ENCODE measurements at regions of chr9 and their contacts with region 1.

Region 1: GRCh38 chr9:5450359-5451091 is at the start of gene CD274:
- DNase-seq: peak; percentile 70 to 91
- ATAC-seq: peak; percentile 98 to 99
- H3K4me3 ChIP-seq: peak within 1 kb of the TSS; percentile 47
- H3K27ac ChIP-seq: peak within 1 kb of the TSS; percentile 69 to 84
- H3K4me1 ChIP-seq: peaks cover 54% of the 10 kb centered on the region
- CTCF ChIP-seq: peak; percentile 75
- EP300 ChIP-seq: no peak
- POLR2A ChIP-seq: peak; percentile 44
- RAD21 ChIP-seq: peak; percentile 80 to 83
- polyA plus RNA-seq, gene CD274: 6.4 and 6.8 TPM in 2 replicates

Region 2: DNA sequence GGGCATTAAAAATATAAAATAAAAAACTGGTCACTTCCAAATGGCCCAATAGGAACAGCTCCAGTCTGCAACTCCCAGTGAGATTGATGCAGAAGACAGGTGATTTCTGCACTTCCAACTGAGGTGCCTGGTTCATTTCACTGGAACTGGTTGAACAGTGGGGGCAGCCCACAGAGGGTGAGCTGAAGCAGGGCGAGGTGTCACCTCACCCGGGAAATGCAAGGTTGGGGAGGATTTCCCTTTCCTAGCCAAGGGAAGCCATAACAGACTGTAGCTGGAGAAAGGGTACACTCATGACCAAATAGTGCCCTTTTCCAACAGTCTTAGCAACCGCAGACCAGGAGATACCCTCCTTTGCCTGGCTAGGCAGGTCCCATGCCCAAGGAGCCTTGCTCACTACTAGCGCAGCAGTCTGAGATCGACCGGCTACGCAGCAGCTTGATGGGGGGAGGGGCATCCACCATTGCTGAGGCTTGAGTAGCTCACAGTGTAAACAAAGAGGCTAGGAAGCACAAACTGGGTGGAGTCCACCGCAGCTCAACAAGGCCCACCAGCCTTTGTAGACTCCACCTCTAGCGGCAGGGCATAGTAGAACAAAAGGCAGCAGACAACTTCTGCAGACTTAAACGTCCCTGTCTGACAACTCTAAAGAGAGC is 123.5 kb before region 1 on chr9:
- CTCF ChIA-PET with region 1: no interaction called
- POLR2A ChIA-PET with region 1: no interaction called
- DNase-seq: no peak
- ATAC-seq: no peak
- H3K4me3 ChIP-seq: no peak overlapping the region
- H3K27ac ChIP-seq: no peak overlapping the region
- H3K4me1 ChIP-seq: no peaks in the 10 kb centered on the region
- CTCF ChIP-seq: no peak
- EP300 ChIP-seq: no peak
- POLR2A ChIP-seq: no peak
- RAD21 ChIP-seq: no peak

Region 3: GRCh38 chr9:5437254-5438216 is 13.0 kb before region 1 on chr9 and contains the start of gene PLGRKT:
- CTCF ChIA-PET with region 1: interaction called, 8 read pairs
- POLR2A ChIA-PET with region 1: interaction called, 17 read pairs
- DNase-seq: peak; percentile 82 to 94
- ATAC-seq: peak; percentile 97 to 99
- H3K4me3 ChIP-seq: peak within 1 kb of the TSS; percentile 73
- H3K27ac ChIP-seq: peak within 1 kb of the TSS; percentile 87 to 91
- H3K4me1 ChIP-seq: peaks cover 18% of the 10 kb centered on the region
- CTCF ChIP-seq: no peak
- EP300 ChIP-seq: no peak
- POLR2A ChIP-seq: peak; percentile 94
- RAD21 ChIP-seq: no peak
- polyA plus RNA-seq, gene PLGRKT: 22.4 and 37.7 TPM in 2 replicates

Region 4: GRCh38 chr9:5510360-5510931 is 59.9 kb after region 1 on chr9 and contains the start of gene PDCD1LG2:
- CTCF ChIA-PET with region 1: interaction called, 13 read pairs
- POLR2A ChIA-PET with region 1: interaction called, 5 read pairs
- DNase-seq: no peak
- ATAC-seq: peak; percentile 49 to 51; a peak in 3 of 6 replicates
- H3K4me3 ChIP-seq: no peak within 1 kb of the TSS
- H3K27ac ChIP-seq: peak within 1 kb of the TSS; percentile 62 to 81
- H3K4me1 ChIP-seq: peaks cover 24% of the 10 kb centered on the region
- CTCF ChIP-seq: no peak
- EP300 ChIP-seq: no peak
- POLR2A ChIP-seq: no peak
- RAD21 ChIP-seq: no peak
- polyA plus RNA-seq, gene PDCD1LG2: 0.46 and 0.53 TPM in 2 replicates

Region 5: DNA sequence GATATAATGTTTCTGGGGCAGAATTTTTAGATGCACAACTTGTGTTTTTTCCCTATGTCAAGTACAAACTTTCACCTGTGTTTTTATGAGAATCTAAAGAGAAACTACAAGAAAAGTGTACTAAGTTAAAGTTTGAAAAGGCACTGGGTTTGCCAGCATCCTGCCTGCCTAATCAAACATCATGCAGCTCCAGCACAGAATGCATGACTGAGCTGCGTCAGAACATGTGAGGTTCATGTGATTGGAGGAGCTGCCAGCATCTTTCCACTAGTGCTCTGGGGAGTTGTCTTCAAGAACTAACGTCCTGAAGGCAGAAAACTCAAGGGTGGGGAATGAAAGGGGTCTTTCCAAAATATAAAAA is 132.3 kb after region 1 on chr9:
- CTCF ChIA-PET with region 1: interaction called, 96 read pairs
- POLR2A ChIA-PET with region 1: interaction called, 4 read pairs
- DNase-seq: no peak
- ATAC-seq: peak; percentile 82 to 89
- H3K4me3 ChIP-seq: no peak overlapping the region
- H3K27ac ChIP-seq: 0 out of 6 replicates have a peak overlapping the region, but pooled peaks of 1 of the 2 experiments have one; percentile 3
- H3K4me1 ChIP-seq: peaks cover 8% of the 10 kb centered on the region; the same call in 2 of the 3 replicates
- CTCF ChIP-seq: no peak
- EP300 ChIP-seq: no peak
- POLR2A ChIP-seq: no peak
- RAD21 ChIP-seq: no peak

Region 6: DNA sequence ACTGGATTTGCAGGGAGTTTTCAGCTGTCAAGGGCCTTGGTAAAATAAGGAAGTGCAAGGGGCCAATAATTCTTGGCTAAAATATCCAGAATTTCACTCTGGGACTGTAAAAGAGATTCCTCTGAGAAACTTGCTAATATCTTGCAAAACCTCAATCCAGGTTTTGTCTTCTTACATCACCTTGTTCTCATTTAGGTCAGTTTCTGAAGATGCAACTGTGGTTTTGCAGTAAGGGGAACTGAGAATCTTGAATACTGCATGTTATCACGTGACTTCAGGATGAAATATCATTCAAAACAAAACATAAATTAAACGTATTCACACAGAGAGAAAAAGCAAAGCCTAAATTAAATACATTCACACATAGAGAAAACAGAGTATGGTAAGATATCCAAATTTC is 143.4 kb after region 1 on chr9:
- CTCF ChIA-PET with region 1: interaction called, 96 read pairs
- POLR2A ChIA-PET with region 1: no interaction called
- DNase-seq: no peak
- ATAC-seq: no peak
- H3K4me3 ChIP-seq: no peak overlapping the region
- H3K27ac ChIP-seq: no peak overlapping the region
- H3K4me1 ChIP-seq: no peaks in the 10 kb centered on the region
- CTCF ChIP-seq: no peak
- EP300 ChIP-seq: no peak
- POLR2A ChIP-seq: no peak
- RAD21 ChIP-seq: no peak

Region 7: GRCh38 chr9:5628530-5629311 is 178.2 kb after region 1 on chr9 and contains the start of gene RIC1:
- CTCF ChIA-PET with region 1: interaction called, 7 read pairs
- POLR2A ChIA-PET with region 1: interaction called, 21 read pairs
- DNase-seq: peak; percentile 92 to 94
- ATAC-seq: peak; percentile 86 to 90
- H3K4me3 ChIP-seq: peak within 1 kb of the TSS; percentile 84
- H3K27ac ChIP-seq: peak within 1 kb of the TSS; percentile 87 to 97
- H3K4me1 ChIP-seq: peaks cover 47% of the 10 kb centered on the region
- CTCF ChIP-seq: no peak
- EP300 ChIP-seq: no peak
- POLR2A ChIP-seq: peak; percentile 92
- RAD21 ChIP-seq: peak in 1 of 2 experiments; percentile 18; a peak in 1 of 5 replicates
- polyA plus RNA-seq, gene RIC1: 26.8 and 32.8 TPM in 2 replicates

Region 8: DNA sequence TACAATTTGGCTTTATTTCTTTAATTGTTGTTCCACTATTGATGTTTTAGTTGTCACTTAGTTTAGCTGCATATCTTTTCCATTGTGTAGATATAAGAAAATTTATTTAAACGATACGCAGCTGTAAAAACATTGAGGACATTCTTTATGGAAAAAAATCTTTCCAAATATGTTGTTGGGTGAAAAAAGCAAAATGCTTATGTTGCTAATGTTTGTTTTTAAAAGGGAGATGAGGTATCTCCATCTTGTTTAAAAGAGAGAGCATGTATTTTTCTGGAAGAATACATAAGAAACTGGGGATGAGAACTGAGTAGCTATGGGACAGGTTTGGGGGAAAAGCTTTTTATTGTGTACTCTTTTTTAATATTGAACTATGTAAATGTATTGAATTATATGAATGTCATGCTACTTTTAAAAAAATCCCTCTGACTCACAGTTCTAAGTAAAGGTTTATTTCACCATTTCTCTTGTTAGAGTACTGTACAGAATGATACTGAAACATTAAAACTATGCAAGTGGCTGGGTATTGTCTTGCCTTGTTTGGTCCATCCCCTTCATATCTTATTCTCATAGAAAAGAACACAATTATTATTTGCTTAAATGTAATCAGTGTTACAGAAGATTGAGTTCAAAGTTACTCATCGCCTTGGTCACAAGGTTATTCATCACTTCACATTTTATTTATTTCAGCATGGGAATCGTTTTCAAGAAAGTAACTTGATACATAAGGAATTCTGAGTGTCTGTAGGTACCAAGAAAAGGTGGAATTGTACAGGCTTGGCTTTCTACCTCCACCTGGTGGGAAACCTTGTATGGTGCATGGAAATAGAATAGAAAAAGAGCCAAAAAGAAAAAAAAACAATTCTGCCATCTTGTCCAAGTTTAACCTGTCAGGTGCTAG is 264.2 kb after region 1 on chr9:
- CTCF ChIA-PET with region 1: no interaction called
- POLR2A ChIA-PET with region 1: no interaction called
- DNase-seq: peak in 1 of 2 experiments; percentile 46
- ATAC-seq: peak; percentile 34 to 54; a peak in 3 of 6 replicates
- H3K4me3 ChIP-seq: no peak overlapping the region
- H3K27ac ChIP-seq: no peak overlapping the region
- H3K4me1 ChIP-seq: peaks cover 28% of the 10 kb centered on the region
- CTCF ChIP-seq: peak; percentile 42
- EP300 ChIP-seq: no peak
- POLR2A ChIP-seq: no peak
- RAD21 ChIP-seq: peak; percentile 44 to 46; a peak in 4 of 5 replicates

Measured in A549 (cell line).